ENCODE measurements at regions of chr2 and their contacts with region 1.

Region 1: DNA sequence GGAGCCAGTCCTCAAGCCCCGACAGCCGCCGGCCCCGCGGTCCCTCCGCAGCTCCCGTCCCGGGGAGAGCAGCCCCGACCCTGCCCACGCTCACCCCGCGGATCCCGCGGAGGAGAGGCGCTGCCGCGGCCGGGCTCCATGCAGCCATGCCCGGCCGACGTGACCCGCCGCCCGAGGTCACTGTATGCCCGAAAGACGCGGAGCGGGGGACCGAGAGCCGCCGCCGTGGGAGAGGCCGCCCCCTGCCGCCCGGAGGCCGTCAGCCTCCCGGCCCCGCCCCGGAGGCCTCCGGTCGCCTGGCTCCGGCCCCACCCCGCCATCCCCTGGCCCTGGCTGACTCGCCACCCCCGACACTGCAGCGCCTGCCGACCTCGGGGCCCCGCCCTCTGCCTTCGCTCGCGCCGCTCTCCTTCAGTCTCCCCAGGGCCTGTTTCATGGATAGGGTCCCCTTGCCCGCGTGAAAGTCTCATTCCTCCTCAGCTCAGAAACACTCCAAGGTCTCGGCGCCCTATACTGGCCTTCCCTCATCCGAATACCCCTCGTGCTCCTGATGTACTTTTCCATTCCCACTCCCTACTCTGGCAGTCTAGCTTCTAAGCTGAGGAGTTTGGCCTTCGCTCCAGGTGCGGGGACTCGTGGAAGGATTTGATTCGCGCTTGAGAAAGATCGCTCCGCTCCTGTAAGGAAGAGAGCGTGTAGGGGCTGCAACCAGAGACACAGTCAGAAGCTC is at the start of gene BOLA3:
- DNase-seq: peak; percentile 90
- ATAC-seq: peak; percentile 96
- H3K4me3 Mint-ChIP-seq: no peak within 1 kb of the TSS
- H3K27ac Mint-ChIP-seq: no peak within 1 kb of the TSS
- H3K4me1 Mint-ChIP-seq: peaks cover 4% of the 10 kb centered on the region
- H3K27me3 Mint-ChIP-seq: no peaks in the 10 kb centered on the region
- CTCF ChIP-seq: peak; percentile 71
- total RNA-seq, gene BOLA3: 131 to 135 TPM

Region 2: DNA sequence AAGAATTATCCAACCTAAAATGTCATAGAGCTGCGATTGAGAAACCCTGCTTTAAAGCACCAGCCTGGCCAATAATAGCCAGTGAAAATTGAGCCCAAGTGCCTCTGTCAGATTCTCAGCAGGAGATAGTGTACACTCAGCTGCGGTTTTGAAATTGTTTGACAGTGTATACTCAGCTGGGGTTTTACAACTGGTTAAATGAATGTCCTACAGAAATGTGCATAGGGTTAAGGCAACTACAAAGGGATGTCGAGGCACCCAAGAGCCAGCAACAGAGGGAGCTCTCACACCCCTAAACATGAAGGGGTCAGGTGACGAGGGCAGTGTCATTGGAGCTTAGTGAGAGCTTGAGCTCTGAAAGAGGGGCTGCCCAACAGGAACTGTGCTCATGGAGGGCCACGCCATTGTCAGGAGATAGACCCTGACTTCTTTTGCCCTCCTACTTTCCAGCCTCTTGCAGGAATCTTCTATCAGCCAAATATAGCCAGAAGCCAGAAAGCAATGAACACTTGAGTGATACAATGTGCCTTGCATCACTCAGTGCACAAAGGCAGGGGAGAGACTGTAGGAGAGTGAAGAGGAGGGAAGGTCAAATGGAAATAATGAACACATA is 239.9 kb before region 1 on chr2:
- CTCF ChIA-PET with region 1: interaction called, 16 read pairs
- POLR2A ChIA-PET with region 1: interaction called, 3 read pairs
- intact Hi-C with region 1: no loop called
- DNase-seq: peak; percentile 84
- ATAC-seq: peak; percentile 95
- H3K4me3 Mint-ChIP-seq: no peak overlapping the region
- H3K27ac Mint-ChIP-seq: peak overlapping the region; percentile 75
- H3K4me1 Mint-ChIP-seq: peaks cover 10% of the 10 kb centered on the region
- H3K27me3 Mint-ChIP-seq: no peaks in the 10 kb centered on the region
- CTCF ChIP-seq: peak; percentile 48

Region 3: DNA sequence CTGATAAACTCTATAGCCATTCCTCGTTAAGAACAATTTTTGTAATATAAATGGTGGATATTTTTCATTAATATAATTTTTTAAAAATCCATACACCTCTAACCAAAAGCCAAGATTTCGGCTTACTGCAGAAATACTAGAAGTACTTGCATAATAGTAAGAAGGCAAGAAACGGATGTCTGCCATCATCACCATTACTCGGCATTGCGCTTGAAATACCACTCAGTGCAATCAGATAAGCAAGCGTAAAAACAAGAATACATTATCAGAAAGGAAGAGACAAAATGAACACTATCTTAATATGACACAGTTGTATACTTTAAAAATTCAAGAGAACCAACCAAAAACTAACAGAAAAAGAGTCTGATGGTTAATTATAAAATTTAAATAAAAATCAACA is 15.1 kb after region 1 on chr2:
- CTCF ChIA-PET with region 1: interaction called, 11 read pairs
- POLR2A ChIA-PET with region 1: interaction called, 13 read pairs
- intact Hi-C with region 1: no loop called
- DNase-seq: no peak
- ATAC-seq: no peak
- H3K4me3 Mint-ChIP-seq: no peak overlapping the region
- H3K27ac Mint-ChIP-seq: no peak overlapping the region
- H3K4me1 Mint-ChIP-seq: peaks cover 6% of the 10 kb centered on the region
- H3K27me3 Mint-ChIP-seq: no peaks in the 10 kb centered on the region
- CTCF ChIP-seq: no peak

Region 4: DNA sequence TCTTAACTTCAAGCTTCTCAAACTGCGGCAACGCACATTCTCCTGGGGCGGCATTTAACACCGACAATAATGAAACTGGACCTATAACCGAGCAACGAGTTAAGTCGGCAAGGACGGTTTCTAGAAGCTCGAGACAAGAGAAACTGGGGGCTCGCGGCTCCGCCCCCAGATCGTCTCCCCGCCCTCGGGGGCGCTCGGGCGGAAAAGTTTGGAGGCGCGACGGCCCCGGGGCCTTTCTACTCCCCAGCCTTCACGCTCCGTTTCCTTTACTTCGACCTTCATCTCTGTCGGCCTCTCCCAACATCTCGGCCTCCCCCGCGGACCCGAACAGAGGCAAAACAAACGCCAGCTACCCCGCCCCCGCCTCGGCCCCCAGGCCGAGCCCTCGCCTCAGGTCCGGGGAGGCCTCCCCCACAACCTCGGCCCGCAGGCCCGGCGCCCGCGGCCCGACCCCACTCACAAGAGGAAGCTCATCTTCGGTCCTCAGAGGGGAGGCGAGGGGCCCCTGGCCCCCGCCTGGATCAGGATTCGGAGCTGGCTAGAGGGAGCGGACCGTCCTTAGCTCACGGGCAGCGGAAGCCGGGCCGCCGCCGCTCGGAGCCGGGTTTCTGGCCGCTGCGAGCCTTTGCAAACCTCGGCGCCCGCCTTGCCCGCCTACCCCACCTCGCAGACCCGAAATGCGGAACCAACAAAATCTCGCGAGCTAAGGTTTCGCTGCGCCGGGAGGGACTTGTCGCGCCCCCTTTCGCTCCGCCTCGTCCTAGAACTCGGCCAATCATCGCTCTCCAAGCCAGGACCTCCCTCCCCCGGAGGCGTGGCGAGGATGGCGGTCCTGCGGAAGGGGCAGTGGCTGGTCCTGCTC is 30.5 kb after region 1 on chr2 and contains the start of gene MOB1A:
- CTCF ChIA-PET with region 1: interaction called, 24 read pairs
- POLR2A ChIA-PET with region 1: interaction called, 51 read pairs
- intact Hi-C with region 1: no loop called
- DNase-seq: peak; percentile 99
- ATAC-seq: peak; percentile 94
- H3K4me3 Mint-ChIP-seq: peak within 1 kb of the TSS; percentile 90
- H3K27ac Mint-ChIP-seq: peak within 1 kb of the TSS; percentile 94
- H3K4me1 Mint-ChIP-seq: peaks cover 41% of the 10 kb centered on the region
- H3K27me3 Mint-ChIP-seq: no peaks in the 10 kb centered on the region
- CTCF ChIP-seq: no peak
- total RNA-seq, gene MOB1A: 150 to 156 TPM

Region 5: DNA sequence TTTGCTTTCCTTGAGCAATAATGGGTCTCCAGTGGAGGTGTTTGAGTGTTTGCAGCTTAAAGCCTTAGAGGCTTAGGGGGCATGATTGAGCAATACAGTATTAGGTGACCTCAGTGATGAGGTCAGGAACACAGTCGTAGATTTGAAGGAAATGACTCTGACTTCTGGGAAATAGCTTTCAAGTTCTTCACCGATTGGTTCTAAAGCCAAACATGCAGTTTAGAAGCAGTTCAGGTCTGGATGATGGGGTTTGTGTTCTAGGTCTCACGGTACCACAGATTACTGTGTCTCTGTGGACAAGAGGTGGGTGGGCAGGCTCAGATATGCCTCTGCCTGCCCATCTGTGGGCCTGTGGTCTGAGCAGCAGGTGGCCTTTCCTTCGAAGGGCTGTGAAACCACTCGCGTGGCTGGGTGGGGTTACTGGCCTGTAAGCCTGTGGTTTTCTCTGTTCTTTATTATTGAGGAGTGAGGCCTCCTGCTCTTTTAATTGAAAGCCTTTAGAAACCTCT is 58.3 kb after region 1 on chr2:
- CTCF ChIA-PET with region 1: interaction called, 4 read pairs
- POLR2A ChIA-PET with region 1: interaction called, 31 read pairs
- intact Hi-C with region 1: no loop called
- DNase-seq: peak; percentile 80
- ATAC-seq: peak; percentile 91
- H3K4me3 Mint-ChIP-seq: peak overlapping the region; percentile 67
- H3K27ac Mint-ChIP-seq: peak overlapping the region; percentile 97
- H3K4me1 Mint-ChIP-seq: peaks cover 59% of the 10 kb centered on the region
- H3K27me3 Mint-ChIP-seq: no peaks in the 10 kb centered on the region
- CTCF ChIP-seq: no peak